Common myeloid progenitor, CD34-positive (primary cell): ENCODE measurements at regions of chr3 and their contacts with region 1.

Region 1: DNA sequence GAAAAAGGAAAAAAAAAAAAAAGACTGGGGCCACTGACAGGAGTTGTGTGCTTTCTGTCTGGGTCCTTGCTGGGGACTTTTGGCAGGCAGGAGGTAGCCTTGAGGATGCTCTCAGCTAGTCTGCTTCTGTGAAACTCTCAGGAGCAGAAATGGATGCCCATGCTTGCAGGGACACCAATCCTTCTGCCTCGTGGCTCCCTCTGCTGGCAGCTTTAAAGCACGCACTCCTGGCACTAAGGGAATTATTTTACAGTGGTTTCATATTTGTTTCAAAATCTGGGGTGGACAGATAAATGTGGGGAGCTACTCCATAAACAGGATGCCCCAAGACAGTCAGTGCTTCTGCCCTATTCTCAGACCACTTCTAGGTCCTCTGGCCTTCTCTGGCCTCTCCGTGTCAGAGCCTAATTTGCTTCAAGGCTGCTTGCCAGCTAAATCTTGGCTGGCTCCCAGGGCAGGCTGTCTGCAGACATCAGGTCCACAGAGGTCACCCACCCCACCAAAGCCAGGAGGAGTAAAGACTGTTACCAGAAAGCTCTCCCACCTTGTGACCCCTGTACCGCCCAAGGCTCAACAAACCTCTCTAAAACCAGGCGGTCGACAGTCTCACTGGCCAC is 17.1 kb downstream of the TRAIP start:
- DNase-seq: peak; percentile 84 to 94 (median 87)
- H3K4me3 ChIP-seq: no peak overlapping the region
- H3K27ac ChIP-seq: no peak overlapping the region
- H3K4me1 ChIP-seq: peaks cover 0 to 13% (median 6%) of the 10 kb centered on the region in 4 experiments
- H3K27me3 ChIP-seq: no peaks in the 10 kb centered on the region

Region 2: DNA sequence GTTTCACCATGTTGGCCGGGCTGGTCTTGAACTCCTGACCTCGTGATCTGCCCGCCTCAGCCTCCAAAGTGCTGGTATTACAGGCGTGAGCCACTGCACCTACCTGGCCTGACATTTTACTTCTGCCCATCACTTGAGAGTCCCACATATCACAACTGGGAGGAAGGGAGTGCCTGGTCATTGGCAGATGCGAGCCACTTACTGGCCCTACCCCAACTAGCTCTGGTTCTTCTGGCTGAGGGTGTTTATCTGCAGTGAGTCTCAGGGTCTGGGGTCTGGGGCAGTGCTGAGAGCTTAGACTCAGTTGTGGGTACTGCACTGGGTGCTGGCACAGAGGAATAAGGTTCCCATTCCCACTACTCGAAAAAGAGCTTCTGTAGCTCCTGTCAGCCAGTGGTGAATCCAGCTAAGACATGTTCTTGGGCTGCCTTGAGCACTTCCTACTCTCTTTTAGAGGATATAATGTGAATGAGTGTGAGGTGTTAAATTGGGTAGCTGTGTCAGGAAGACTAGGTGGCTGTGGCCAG is 339.0 kb before region 1 on chr3:
- CTCF ChIA-PET with region 1: no interaction called
- POLR2A ChIA-PET with region 1: no interaction called
- DNase-seq: no peak
- H3K4me3 ChIP-seq: no peak overlapping the region
- H3K27ac ChIP-seq: peak overlapping the region in 1 of 2 experiments; percentile 35
- H3K4me1 ChIP-seq: peaks cover 0 to 2% (median 1%) of the 10 kb centered on the region in 4 experiments
- H3K27me3 ChIP-seq: no peaks in the 10 kb centered on the region

Region 3: GRCh38 chr3:49703443-49703927 is 135.8 kb before region 1 on chr3:
- CTCF ChIA-PET with region 1: interaction called, 19 read pairs
- POLR2A ChIA-PET with region 1: interaction called, 3 read pairs
- DNase-seq: peak; percentile 64 to 84 (median 78)
- H3K4me3 ChIP-seq: no peak overlapping the region
- H3K27ac ChIP-seq: no peak overlapping the region
- H3K4me1 ChIP-seq: peaks cover 0 to 4% (median 3%) of the 10 kb centered on the region in 4 experiments
- H3K27me3 ChIP-seq: no peaks in the 10 kb centered on the region

Region 4: DNA sequence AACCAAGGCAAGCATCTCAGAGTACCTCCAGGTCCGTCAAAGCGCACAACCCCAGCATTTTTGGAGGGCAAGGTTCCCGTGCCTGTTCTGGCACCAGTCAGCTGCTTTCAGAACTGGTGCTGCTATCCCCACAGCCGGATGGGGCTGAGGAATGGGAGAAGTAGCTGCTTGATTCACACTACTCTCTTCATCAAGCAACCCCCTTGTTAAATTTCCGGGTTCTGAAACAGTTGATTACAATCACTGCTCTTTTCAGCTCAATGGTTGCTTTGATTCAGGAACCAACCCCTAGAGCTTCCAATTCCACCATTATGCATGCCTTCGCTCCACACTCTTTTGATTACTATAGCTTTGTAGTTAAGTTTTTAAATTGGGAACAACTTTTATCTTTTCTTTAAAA is 13.3 kb before region 1 on chr3:
- CTCF ChIA-PET with region 1: interaction called, 807 read pairs
- POLR2A ChIA-PET with region 1: interaction called, 4 read pairs
- DNase-seq: no peak
- H3K4me3 ChIP-seq: no peak overlapping the region
- H3K27ac ChIP-seq: no peak overlapping the region
- H3K4me1 ChIP-seq: peaks cover 0 to 18% (median 11%) of the 10 kb centered on the region in 4 experiments
- H3K27me3 ChIP-seq: no peaks in the 10 kb centered on the region

Region 5: DNA sequence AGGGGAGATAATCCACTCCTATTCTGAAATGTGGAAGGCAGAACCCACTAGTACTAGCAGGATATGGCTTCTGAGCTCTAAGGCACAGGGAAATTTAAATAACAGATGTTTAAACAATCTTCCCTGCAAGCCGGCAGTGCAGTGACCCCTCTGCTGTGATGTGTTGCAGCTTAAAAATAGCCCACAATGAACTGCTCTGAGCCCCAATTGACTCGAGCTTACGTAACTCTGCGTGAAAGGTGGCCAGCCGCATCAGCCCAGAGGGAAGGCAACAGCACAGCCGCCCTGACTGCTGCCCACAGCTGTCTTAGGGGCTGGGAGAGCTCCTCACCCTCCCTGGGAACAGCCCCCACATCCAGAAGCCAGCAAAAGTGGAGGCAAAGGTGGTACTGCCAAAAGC is 42.9 kb after region 1 on chr3:
- CTCF ChIA-PET with region 1: interaction called, 11 read pairs
- POLR2A ChIA-PET with region 1: no interaction called
- DNase-seq: no peak
- H3K4me3 ChIP-seq: no peak overlapping the region
- H3K27ac ChIP-seq: no peak overlapping the region
- H3K4me1 ChIP-seq: peaks cover 0 to 6% (median 0%) of the 10 kb centered on the region in 4 experiments
- H3K27me3 ChIP-seq: no peaks in the 10 kb centered on the region

Region 6: GRCh38 chr3:49906004-49906743 is 66.9 kb after region 1 on chr3:
- CTCF ChIA-PET with region 1: interaction called, 55 read pairs
- POLR2A ChIA-PET with region 1: interaction called, 3 read pairs
- DNase-seq: peak; percentile 66 to 80 (median 79)
- H3K4me3 ChIP-seq: peak overlapping the region in 5 of 7 experiments; percentile 23 to 70 (median 44)
- H3K27ac ChIP-seq: peak overlapping the region in 1 of 2 experiments; percentile 17
- H3K4me1 ChIP-seq: peaks cover 0 to 22% (median 20%) of the 10 kb centered on the region in 4 experiments
- H3K27me3 ChIP-seq: no peaks in the 10 kb centered on the region